Activated T-helper 2 cell treated with anti-CD3 and anti-CD28 coated beads, Interferon-gamma antibody, Interleukin-2, Interleukin-4, amounts not matched to agents 10 μg/mL and 5 μg/mL and 100 μg/mL, durations not matched to agents 14 hours and 24 hours and 36 hours (primary cell): ENCODE measurements at regions of chr1 and their contacts with region 1.

Region 1: GRCh38 chr1:231866392-231867331 is 240.1 kb downstream of the DISC1 start:
- DNase-seq: peak; percentile 12
- H3K4me3 Mint-ChIP-seq: no peak overlapping the region
- H3K27ac Mint-ChIP-seq: no peak overlapping the region
- H3K4me1 Mint-ChIP-seq: peaks cover 6% of the 10 kb centered on the region
- H3K27me3 Mint-ChIP-seq: no peaks in the 10 kb centered on the region

Region 2: DNA sequence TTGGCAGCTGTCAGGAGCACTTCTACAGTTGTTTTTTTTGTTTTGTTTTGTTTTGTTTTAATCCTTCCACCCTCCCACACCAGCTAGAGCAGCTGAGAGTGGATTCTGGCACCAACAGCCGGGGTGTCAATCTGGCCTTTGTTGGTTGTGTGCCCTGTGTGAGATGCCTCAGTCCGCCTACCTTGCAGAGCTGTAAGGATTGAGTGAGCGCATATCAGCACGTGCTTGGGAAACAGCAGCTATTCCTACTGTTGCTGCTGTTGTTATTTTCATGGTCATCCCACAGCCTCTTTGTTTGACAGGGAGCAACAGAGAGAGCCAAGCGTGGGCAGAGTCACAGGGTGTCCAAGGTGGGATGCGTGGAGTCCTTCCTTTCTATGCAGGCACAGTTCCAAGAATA is 1490.9 kb before region 1 on chr1:
- intact Hi-C with region 1: no loop called
- DNase-seq: no peak
- H3K4me3 Mint-ChIP-seq: no peak overlapping the region
- H3K27ac Mint-ChIP-seq: no peak overlapping the region
- H3K4me1 Mint-ChIP-seq: no peaks in the 10 kb centered on the region
- H3K27me3 Mint-ChIP-seq: peaks cover 3% of the 10 kb centered on the region

Region 3: DNA sequence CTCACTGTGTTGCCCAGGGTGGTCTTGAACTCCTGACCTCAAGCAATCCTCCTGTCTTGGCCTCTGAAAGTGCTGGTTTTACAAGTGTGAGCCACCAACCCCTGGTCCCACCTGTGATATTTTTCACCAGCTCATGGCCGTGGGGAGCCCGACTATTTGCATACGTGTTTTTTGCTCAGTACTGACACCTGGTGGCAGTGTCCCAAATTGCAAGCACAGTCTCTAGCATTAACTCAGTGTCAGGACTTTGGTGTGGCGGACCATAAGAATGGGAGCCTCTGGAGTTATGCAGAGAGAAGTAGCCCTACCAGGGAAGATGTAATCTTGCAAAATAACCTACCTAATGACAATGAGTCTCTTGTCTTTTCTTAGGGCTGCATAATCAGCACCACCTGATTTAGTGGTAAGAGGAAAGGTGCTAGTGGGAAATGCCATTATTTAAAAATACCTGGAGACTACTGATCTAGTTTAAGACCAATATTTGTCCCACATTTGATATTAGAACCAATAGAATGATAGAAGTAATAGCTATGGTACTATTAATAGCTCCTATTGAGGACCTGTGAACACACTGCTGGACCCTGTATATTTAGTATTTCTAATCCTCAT is 65.3 kb after region 1 on chr1:
- intact Hi-C with region 1: loop called (anchors 5 kb)
- DNase-seq: no peak
- H3K4me3 Mint-ChIP-seq: no peak overlapping the region
- H3K27ac Mint-ChIP-seq: no peak overlapping the region
- H3K4me1 Mint-ChIP-seq: no peaks in the 10 kb centered on the region
- H3K27me3 Mint-ChIP-seq: peaks cover 14% of the 10 kb centered on the region